Activated CD8-positive, alpha-beta T cell treated with anti-CD3 and anti-CD28 coated beads for 36 hours (primary cell): ENCODE measurements at regions of chr5 and their contacts with region 1.

Region 1: DNA sequence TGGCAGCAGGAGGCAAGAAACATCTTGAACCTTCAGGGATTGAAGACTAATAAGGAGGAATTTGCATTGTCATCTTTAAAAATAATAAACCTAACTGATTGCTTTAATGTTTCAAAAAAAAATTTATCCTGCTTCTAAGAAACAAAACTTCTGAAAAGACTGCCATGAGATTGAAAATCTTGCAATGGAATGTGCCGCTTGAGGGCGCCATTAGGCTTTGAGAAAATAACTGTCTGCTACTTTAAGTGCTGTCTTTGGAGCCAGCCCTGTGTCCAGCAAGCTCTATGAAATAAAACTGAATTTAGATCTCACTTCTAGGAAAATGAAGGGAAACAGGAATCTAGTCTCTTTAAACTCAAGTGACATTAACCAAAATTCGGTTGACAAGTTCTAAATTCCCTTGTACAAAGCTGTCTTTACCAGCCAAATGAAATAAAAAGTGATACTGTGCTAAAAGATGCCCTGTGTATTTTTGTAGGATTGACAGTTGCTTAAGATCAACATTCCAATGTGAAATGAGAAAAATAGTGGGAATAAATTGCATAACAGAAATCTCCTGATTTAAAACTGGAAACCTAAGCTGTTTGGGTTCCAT is 79.4 kb downstream of the ESM1 start:
- DNase-seq: peak; percentile 90
- ATAC-seq: no peak
- H3K4me3 Mint-ChIP-seq: no peak overlapping the region
- H3K27ac Mint-ChIP-seq: no peak overlapping the region
- H3K4me1 Mint-ChIP-seq: peaks cover 17% of the 10 kb centered on the region
- H3K27me3 Mint-ChIP-seq: peaks cover 36% of the 10 kb centered on the region
- CTCF ChIP-seq: peak; percentile 88

Region 2: GRCh38 chr5:54689411-54690251 is 216.4 kb before region 1 on chr5:
- CTCF ChIA-PET with region 1: no interaction called
- POLR2A ChIA-PET with region 1: no interaction called
- intact Hi-C with region 1: no loop called
- DNase-seq: no peak
- ATAC-seq: no peak
- H3K4me3 Mint-ChIP-seq: no peak overlapping the region
- H3K27ac Mint-ChIP-seq: no peak overlapping the region
- H3K4me1 Mint-ChIP-seq: peaks cover 2% of the 10 kb centered on the region
- H3K27me3 Mint-ChIP-seq: no peaks in the 10 kb centered on the region
- CTCF ChIP-seq: no peak

Region 3: GRCh38 chr5:54895816-54896341 is 10.2 kb before region 1 on chr5:
- CTCF ChIA-PET with region 1: interaction called, 13 read pairs
- POLR2A ChIA-PET with region 1: no interaction called
- intact Hi-C with region 1: no loop called
- DNase-seq: peak; percentile 25
- ATAC-seq: peak; percentile 53
- H3K4me3 Mint-ChIP-seq: no peak overlapping the region
- H3K27ac Mint-ChIP-seq: no peak overlapping the region
- H3K4me1 Mint-ChIP-seq: peaks cover 5% of the 10 kb centered on the region
- H3K27me3 Mint-ChIP-seq: peaks cover 47% of the 10 kb centered on the region
- CTCF ChIP-seq: peak; percentile 51

Region 4: GRCh38 chr5:54930736-54931135 is 24.7 kb after region 1 on chr5:
- CTCF ChIA-PET with region 1: interaction called, 34 read pairs
- POLR2A ChIA-PET with region 1: no interaction called
- intact Hi-C with region 1: no loop called
- DNase-seq: peak; percentile 54
- ATAC-seq: peak; percentile 64
- H3K4me3 Mint-ChIP-seq: no peak overlapping the region
- H3K27ac Mint-ChIP-seq: no peak overlapping the region
- H3K4me1 Mint-ChIP-seq: peaks cover 8% of the 10 kb centered on the region
- H3K27me3 Mint-ChIP-seq: peaks cover 14% of the 10 kb centered on the region
- CTCF ChIP-seq: no peak

Region 5: GRCh38 chr5:54959673-54960418 is 53.8 kb after region 1 on chr5:
- CTCF ChIA-PET with region 1: interaction called, 49 read pairs
- POLR2A ChIA-PET with region 1: no interaction called
- intact Hi-C with region 1: loop called (anchors 5 kb)
- DNase-seq: peak; percentile 72
- ATAC-seq: no peak
- H3K4me3 Mint-ChIP-seq: no peak overlapping the region
- H3K27ac Mint-ChIP-seq: no peak overlapping the region
- H3K4me1 Mint-ChIP-seq: peaks cover 2% of the 10 kb centered on the region
- H3K27me3 Mint-ChIP-seq: peaks cover 4% of the 10 kb centered on the region
- CTCF ChIP-seq: peak; percentile 53

Region 6: DNA sequence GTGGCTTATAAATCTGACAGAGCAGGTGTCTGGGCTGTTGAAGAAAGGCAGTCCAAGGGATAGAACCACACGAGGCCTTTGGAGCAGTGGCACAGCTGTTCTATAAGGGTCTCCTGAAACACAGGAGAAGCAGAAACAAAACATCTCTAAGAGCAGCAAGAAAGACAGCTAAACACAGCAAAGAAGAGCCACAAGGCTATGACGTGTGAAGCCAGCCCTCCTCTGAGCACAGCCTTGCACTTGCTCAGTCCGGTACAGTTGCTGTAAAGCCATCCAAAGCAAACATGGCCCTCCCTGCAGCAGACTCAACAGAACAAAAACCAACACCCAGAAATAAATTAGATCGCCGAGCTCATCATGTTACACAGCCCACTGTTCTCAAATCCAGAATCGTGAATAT is 115.4 kb after region 1 on chr5:
- CTCF ChIA-PET with region 1: interaction called, 4 read pairs
- POLR2A ChIA-PET with region 1: no interaction called
- intact Hi-C with region 1: loop called (anchors 5 kb)
- DNase-seq: no peak
- ATAC-seq: no peak
- H3K4me3 Mint-ChIP-seq: no peak overlapping the region
- H3K27ac Mint-ChIP-seq: peak overlapping the region; percentile 6
- H3K4me1 Mint-ChIP-seq: peaks cover 35% of the 10 kb centered on the region
- H3K27me3 Mint-ChIP-seq: no peaks in the 10 kb centered on the region
- CTCF ChIP-seq: no peak

Region 7: GRCh38 chr5:55159763-55160492 is 253.9 kb after region 1 on chr5 and contains the start of gene GPX8:
- CTCF ChIA-PET with region 1: interaction called, 62 read pairs
- POLR2A ChIA-PET with region 1: interaction called, 3 read pairs
- intact Hi-C with region 1: loop called (anchors 5 kb)
- DNase-seq: peak; percentile 20
- ATAC-seq: peak; percentile 37
- H3K4me3 Mint-ChIP-seq: no peak within 1 kb of the TSS
- H3K27ac Mint-ChIP-seq: no peak within 1 kb of the TSS
- H3K4me1 Mint-ChIP-seq: no peaks in the 10 kb centered on the region
- H3K27me3 Mint-ChIP-seq: peaks cover 20% of the 10 kb centered on the region
- CTCF ChIP-seq: peak; percentile 67
- total RNA-seq, gene GPX8: not detected